Left ventricle myocardium superior (tissue), 1 donor: ENCODE measurements at regions of chr1 and their contacts with region 1.

Region 1: DNA sequence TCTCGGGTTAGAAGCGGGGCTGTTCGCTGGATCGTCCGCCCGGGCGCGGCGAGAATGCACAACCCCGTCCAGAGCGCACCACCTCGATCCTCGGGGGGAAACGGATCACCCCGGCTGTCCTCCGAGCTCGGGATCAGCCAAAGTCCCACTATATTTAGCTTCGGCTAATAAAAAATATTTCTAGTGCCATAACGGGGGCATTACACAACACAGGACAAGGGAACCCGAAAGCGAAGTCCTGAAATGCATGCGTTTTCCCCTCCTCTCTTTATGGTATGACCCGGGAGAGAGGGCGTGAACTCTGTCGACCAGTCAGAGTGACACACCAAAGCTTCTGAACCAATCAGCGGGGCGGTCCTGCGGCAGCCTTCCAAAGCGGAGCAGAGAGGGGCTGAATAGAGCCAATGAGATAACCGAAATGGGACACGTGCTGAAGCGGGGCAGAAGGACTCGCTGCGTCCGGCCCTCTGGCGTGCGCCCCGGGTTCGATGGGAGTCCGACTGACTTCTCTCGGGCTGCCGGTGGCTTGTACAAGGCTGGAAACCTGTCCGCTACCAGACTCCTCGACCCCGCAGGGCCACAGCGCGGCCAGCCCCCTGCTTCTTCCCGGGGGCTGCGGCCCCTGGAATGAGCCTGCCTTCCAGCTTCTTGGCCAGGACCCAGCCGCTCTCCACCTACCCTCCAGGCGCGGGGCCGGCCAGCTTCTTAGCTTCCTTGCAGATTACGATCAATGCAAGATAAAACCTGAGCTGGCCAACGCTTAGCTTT is at the start of gene ALDH4A1:
- DNase-seq: peak; percentile 98
- ATAC-seq: peak; percentile 97
- total RNA-seq, gene ALDH4A1: 27.3 TPM

Region 2: DNA sequence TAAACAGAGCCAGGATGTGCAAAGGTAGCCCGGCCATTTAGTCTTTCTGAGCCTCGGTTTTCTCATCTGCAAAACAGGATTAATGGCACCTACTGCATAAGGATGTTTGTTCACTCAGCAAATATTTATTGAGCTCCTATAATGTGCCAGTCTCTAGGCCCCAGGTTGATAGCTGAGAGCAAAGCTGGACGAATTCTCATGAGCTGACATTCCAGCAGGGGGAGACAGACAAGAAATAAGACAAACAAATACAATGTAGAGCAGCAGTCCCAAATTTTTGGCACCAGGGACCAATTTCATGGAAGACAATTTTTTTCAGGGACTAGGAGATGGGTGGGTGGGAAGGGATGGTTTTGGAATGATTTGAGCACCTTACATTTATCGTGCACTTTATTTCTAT is 346.3 kb before region 1 on chr1:
- intact Hi-C with region 1: no loop called
- DNase-seq: no peak
- ATAC-seq: no peak

Region 3: GRCh38 chr1:19096036-19096833 is 193.5 kb after region 1 on chr1:
- intact Hi-C with region 1: loop called (anchors 10 kb)
- DNase-seq: peak; percentile 54
- ATAC-seq: peak; percentile 84

Region 4: GRCh38 chr1:19367584-19368041 is 464.9 kb after region 1 on chr1:
- intact Hi-C with region 1: no loop called
- DNase-seq: no peak
- ATAC-seq: no peak